ENCODE measurements at regions of chr14 and their contacts with region 1.

Region 1: DNA sequence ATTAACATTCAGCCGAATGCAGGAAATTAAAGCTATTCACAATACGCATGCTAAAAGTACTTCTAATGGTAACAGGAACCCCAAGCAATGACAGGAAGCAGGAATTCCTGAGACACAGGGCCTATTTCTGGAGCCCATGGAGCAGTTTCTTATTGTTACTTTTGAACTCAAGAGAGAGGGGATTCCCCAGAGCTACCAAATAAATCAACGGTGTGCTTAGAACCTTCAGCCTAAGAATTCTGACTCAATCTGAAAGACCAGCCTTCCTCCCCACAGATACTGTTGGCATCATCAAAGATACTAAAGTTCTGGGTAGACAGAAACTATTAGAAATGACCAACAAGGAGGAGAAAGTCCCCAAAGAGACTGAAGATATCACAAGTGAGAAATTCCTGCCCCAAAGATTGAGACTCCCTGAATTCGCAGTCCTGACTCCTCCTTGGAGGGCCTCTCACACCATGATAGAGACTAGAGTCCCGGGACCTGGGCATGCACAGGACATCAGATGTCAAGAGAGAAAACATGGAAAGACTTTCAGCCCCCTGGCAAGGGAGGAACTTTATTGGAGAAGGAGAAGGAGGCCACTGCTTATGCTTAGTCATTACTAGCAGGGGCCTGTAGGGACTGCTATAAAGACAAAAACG is 32.7 kb downstream of the RTRAF start:
- DNase-seq: peak; percentile 89
- H3K4me3 ChIP-seq: no peak overlapping the region
- H3K27ac ChIP-seq: peak overlapping the region; percentile 88
- H3K4me1 ChIP-seq: peaks cover 72% of the 10 kb centered on the region
- H3K27me3 ChIP-seq: no peaks in the 10 kb centered on the region
- CTCF ChIP-seq: no peak
- POLR2A ChIP-seq: peak; percentile 22

Region 2: DNA sequence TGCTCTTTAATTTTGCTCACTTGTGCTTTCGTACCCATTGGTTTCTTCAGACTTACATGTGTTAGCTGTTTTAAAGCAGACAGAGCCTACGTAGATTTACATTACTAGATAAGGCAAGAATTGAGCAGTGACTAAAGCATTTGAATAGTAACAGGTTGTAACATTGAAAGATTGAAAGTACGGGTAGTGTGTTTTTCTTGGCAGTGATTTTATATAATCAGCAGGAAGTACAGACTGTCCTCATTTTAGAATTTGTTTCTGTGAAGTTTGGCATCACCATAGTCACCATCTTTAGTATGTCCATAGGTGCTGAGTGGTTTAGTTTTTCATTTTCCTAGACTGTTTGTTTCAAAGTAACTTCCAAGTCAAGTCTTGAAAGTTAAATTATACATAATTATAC is 18.8 kb before region 1 on chr14:
- CTCF ChIA-PET with region 1: no interaction called
- POLR2A ChIA-PET with region 1: no interaction called
- dilution Hi-C with region 1: no loop called
- intact Hi-C with region 1: loop called (anchors 2 kb)
- DNase-seq: peak; percentile 33
- H3K4me3 ChIP-seq: no peak overlapping the region
- H3K27ac ChIP-seq: peak overlapping the region; percentile 66
- H3K4me1 ChIP-seq: peaks cover 17% of the 10 kb centered on the region
- H3K27me3 ChIP-seq: no peaks in the 10 kb centered on the region
- CTCF ChIP-seq: no peak
- POLR2A ChIP-seq: no peak

Region 3: GRCh38 chr14:52043690-52044089 is 21.6 kb after region 1 on chr14:
- CTCF ChIA-PET with region 1: interaction called, 15 read pairs
- POLR2A ChIA-PET with region 1: no interaction called
- dilution Hi-C with region 1: no loop called
- intact Hi-C with region 1: no loop called
- DNase-seq: peak; percentile 37
- H3K4me3 ChIP-seq: no peak overlapping the region
- H3K27ac ChIP-seq: no peak overlapping the region
- H3K4me1 ChIP-seq: peaks cover 4% of the 10 kb centered on the region
- H3K27me3 ChIP-seq: peaks cover 0 to 2% of the 10 kb centered on the region in 2 experiments
- CTCF ChIP-seq: peak; percentile 54 to 76
- POLR2A ChIP-seq: no peak

Region 4: GRCh38 chr14:52467515-52468266 is 445.6 kb after region 1 on chr14:
- CTCF ChIA-PET with region 1: no interaction called
- POLR2A ChIA-PET with region 1: no interaction called
- dilution Hi-C with region 1: no loop called
- intact Hi-C with region 1: no loop called
- DNase-seq: no peak
- H3K4me3 ChIP-seq: no peak overlapping the region
- H3K27ac ChIP-seq: no peak overlapping the region
- H3K4me1 ChIP-seq: no peaks in the 10 kb centered on the region
- H3K27me3 ChIP-seq: no peaks in the 10 kb centered on the region
- CTCF ChIP-seq: no peak
- POLR2A ChIP-seq: no peak